ENCODE measurements at regions of chr19 and their contacts with region 1.

Region 1: GRCh38 chr19:52139252-52140031 is at the start of gene ZNF616:
- DNase-seq: peak; percentile 47 to 98 (median 82)
- ATAC-seq: peak; percentile 47
- H3K4me3 ChIP-seq: peak within 1 kb of the TSS; percentile 84 to 97
- H3K4me3 Mint-ChIP-seq: peak within 1 kb of the TSS; percentile 98
- H3K27ac ChIP-seq: peak within 1 kb of the TSS; percentile 79 to 90
- H3K27ac Mint-ChIP-seq: peak within 1 kb of the TSS; percentile 97
- H3K4me1 ChIP-seq: peaks cover 18% of the 10 kb centered on the region
- H3K4me1 Mint-ChIP-seq: peaks cover 42% of the 10 kb centered on the region
- H3K27me3 ChIP-seq: no peaks in the 10 kb centered on the region
- H3K27me3 Mint-ChIP-seq: no peaks in the 10 kb centered on the region
- CTCF ChIP-seq: peak; percentile 73
- total RNA-seq, gene ZNF616: 1.8 to 3.0 TPM

Region 2: GRCh38 chr19:52095172-52096014 is 44.0 kb before region 1 on chr19 and contains the start of gene ZNF841:
- CTCF ChIA-PET with region 1: no interaction called
- POLR2A ChIA-PET with region 1: no interaction called
- intact Hi-C with region 1: loop called (anchors 1 kb)
- DNase-seq: peak; percentile 70 to 89 (median 83)
- ATAC-seq: peak; percentile 97
- H3K4me3 ChIP-seq: peak within 1 kb of the TSS; percentile 96 to 99
- H3K4me3 Mint-ChIP-seq: peak within 1 kb of the TSS; percentile 97
- H3K27ac ChIP-seq: peak within 1 kb of the TSS; percentile 86 to 87
- H3K27ac Mint-ChIP-seq: peak within 1 kb of the TSS; percentile 93
- H3K4me1 ChIP-seq: peaks cover 16% of the 10 kb centered on the region
- H3K4me1 Mint-ChIP-seq: peaks cover 41% of the 10 kb centered on the region
- H3K27me3 ChIP-seq: no peaks in the 10 kb centered on the region
- H3K27me3 Mint-ChIP-seq: no peaks in the 10 kb centered on the region
- CTCF ChIP-seq: no peak
- total RNA-seq, gene ZNF841: 18.9 to 19.9 TPM

Region 3: DNA sequence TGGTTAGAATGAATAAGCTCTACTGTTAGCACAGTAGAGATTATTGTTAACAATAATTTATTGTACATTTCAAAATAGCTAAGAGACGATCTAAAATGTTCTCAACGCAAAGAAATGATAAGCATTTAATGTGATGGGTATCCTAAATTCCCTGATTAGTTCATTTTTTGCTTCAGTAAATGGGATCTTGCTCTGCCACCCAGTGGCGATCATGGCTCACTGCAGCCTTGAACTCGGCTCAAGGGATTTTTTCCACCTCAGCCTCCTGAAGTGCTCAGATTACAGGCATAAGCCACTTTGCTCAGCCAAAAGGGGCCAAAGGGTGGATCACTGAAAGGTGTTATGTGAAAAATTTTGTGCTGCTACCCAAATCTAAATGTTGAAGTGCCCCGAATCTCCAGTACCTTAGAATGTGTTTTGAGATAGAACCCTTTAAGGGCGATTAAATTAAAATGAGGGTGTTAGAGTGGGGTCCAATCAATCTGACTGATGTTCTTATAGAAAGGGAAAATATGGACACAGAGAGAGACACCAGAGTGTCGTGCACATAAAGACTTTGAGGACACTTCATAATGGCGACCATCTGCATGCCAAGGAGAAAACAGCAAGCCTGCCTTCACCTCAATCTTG is 98.4 kb after region 1 on chr19:
- CTCF ChIA-PET with region 1: interaction called, 47 read pairs
- POLR2A ChIA-PET with region 1: interaction called, 5 read pairs
- intact Hi-C with region 1: loop called in 1 of 2 experiments (anchors 1 kb)
- DNase-seq: peak; percentile 12 to 75 (median 53)
- ATAC-seq: peak; percentile 88
- H3K4me3 ChIP-seq: no peak overlapping the region
- H3K4me3 Mint-ChIP-seq: no peak overlapping the region
- H3K27ac ChIP-seq: no peak overlapping the region
- H3K27ac Mint-ChIP-seq: no peak overlapping the region
- H3K4me1 ChIP-seq: no peaks in the 10 kb centered on the region
- H3K4me1 Mint-ChIP-seq: no peaks in the 10 kb centered on the region
- H3K27me3 ChIP-seq: no peaks in the 10 kb centered on the region
- H3K27me3 Mint-ChIP-seq: no peaks in the 10 kb centered on the region
- CTCF ChIP-seq: peak; percentile 99

Region 4: GRCh38 chr19:52527134-52527955 is 387.9 kb after region 1 on chr19 and contains the start of gene ZNF808:
- CTCF ChIA-PET with region 1: no interaction called
- POLR2A ChIA-PET with region 1: interaction called, 3 read pairs
- intact Hi-C with region 1: loop called in 1 of 2 experiments (anchors 1 kb)
- DNase-seq: peak; percentile 96 to 98 (median 97)
- ATAC-seq: peak; percentile 95
- H3K4me3 ChIP-seq: peak within 1 kb of the TSS; percentile 78 to 98
- H3K4me3 Mint-ChIP-seq: peak within 1 kb of the TSS; percentile 98
- H3K27ac ChIP-seq: peak within 1 kb of the TSS; percentile 89 to 97
- H3K27ac Mint-ChIP-seq: peak within 1 kb of the TSS; percentile 99
- H3K4me1 ChIP-seq: peaks cover 13% of the 10 kb centered on the region
- H3K4me1 Mint-ChIP-seq: peaks cover 29% of the 10 kb centered on the region
- H3K27me3 ChIP-seq: no peaks in the 10 kb centered on the region
- H3K27me3 Mint-ChIP-seq: no peaks in the 10 kb centered on the region
- CTCF ChIP-seq: peak; percentile 33
- total RNA-seq, gene ZNF808: 16.4 to 19.2 TPM

Region 5: DNA sequence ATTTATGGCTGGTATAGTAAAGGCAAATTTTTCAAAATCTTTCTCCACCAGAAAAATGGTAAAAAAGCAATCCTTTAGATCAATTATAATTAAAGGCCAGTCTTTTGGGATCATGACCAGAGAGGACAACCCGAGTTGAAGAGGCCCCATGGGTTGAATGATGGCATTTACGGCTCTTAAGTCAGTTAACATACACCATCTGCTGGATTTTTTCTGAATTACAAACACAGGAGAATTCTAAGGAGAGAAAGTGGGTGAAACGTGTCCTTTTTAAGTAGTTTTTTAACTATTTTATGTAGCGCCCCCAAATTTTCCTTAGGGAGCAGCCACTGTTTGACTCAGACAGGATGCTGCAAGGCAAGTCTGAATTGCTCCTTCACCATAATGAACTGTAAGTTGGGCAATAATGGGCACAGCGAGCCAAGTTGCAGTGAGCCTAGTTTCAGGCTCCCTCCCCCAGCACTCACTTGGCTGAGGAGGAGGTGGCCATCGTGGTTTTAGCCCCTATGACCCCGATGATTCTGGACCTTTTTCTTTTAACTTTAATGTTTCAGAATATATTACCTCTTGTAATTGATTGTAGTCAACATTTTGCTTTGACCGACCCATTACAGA is 609.0 kb after region 1 on chr19:
- CTCF ChIA-PET with region 1: no interaction called
- POLR2A ChIA-PET with region 1: no interaction called
- intact Hi-C with region 1: loop called (anchors 5 kb)
- DNase-seq: peak in 3 of 9 experiments; percentile 33 to 76 (median 65)
- ATAC-seq: peak; percentile 46
- H3K4me3 ChIP-seq: no peak overlapping the region
- H3K4me3 Mint-ChIP-seq: no peak overlapping the region
- H3K27ac ChIP-seq: no peak overlapping the region
- H3K27ac Mint-ChIP-seq: no peak overlapping the region
- H3K4me1 ChIP-seq: no peaks in the 10 kb centered on the region
- H3K4me1 Mint-ChIP-seq: peaks cover 11% of the 10 kb centered on the region
- H3K27me3 ChIP-seq: no peaks in the 10 kb centered on the region
- H3K27me3 Mint-ChIP-seq: no peaks in the 10 kb centered on the region
- CTCF ChIP-seq: peak; percentile 68